ENCODE measurements at regions of chr12 and their contacts with region 1.

Region 1: GRCh38 chr12:6792522-6793201 is 3.3 kb downstream of the CD4 start:
- DNase-seq: peak in 7 of 9 donors; percentile 66 to 79 (median 76)
- ATAC-seq: peak; percentile 76
- H3K4me3 ChIP-seq: peak overlapping the region; percentile 87
- H3K4me3 Mint-ChIP-seq: peak overlapping the region; percentile 85 to 99 (median 96)
- H3K27ac ChIP-seq: peak overlapping the region; percentile 86
- H3K27ac Mint-ChIP-seq: peak overlapping the region; percentile 88 to 99 (median 97)
- H3K4me1 ChIP-seq: peaks cover 0 to 29% of the 10 kb centered on the region in 2 donors
- H3K4me1 Mint-ChIP-seq: peaks cover 52 to 84% (median 72%) of the 10 kb centered on the region in 7 donors
- H3K27me3 ChIP-seq: no peaks in the 10 kb centered on the region
- H3K27me3 Mint-ChIP-seq: no peaks in the 10 kb centered on the region

Region 2: GRCh38 chr12:6764011-6764828 is 28.4 kb before region 1 on chr12:
- CTCF ChIA-PET with region 1: interaction called, 6 read pairs
- POLR2A ChIA-PET with region 1: interaction called, 18 read pairs
- intact Hi-C with region 1: loop called in 1 of 2 experiments (anchors 1 kb)
- DNase-seq: peak in 7 of 9 donors; percentile 40 to 69 (median 55)
- ATAC-seq: peak; percentile 88
- H3K4me3 ChIP-seq: no peak overlapping the region
- H3K4me3 Mint-ChIP-seq: peak overlapping the region; percentile 18 to 96 (median 67)
- H3K27ac ChIP-seq: no peak overlapping the region
- H3K27ac Mint-ChIP-seq: peak overlapping the region in 4 of 9 donors; percentile 9 to 71 (median 43)
- H3K4me1 ChIP-seq: peaks cover 7 to 16% of the 10 kb centered on the region in 2 donors
- H3K4me1 Mint-ChIP-seq: peaks cover 22 to 38% (median 31%) of the 10 kb centered on the region in 7 donors
- H3K27me3 ChIP-seq: no peaks in the 10 kb centered on the region
- H3K27me3 Mint-ChIP-seq: peaks cover 5 to 38% (median 26%) of the 10 kb centered on the region in 5 donors

Region 3: DNA sequence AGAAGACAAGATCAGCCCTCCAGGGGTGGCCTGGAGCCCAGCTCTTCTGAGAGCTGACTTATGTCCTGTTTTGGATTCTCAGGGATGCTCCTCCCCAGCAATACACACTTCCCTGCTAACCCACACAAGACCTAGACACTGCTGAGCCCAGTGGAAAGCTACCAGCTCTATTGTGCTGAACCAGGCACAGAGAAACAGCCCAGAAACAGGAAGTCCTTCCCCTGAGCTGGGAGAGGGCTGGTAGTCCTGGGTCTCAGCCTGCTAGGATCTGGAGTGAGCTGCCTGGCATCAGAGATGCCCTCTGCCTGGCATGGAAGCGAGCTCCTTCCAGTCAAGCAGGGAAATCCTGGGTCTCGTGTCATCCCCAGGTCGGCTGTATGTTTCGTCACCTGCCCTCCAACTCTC is 21.6 kb before region 1 on chr12:
- CTCF ChIA-PET with region 1: interaction called, 6 read pairs
- POLR2A ChIA-PET with region 1: interaction called, 18 read pairs
- intact Hi-C with region 1: loop called (anchors 1 to 2 kb)
- DNase-seq: no peak
- ATAC-seq: no peak
- H3K4me3 ChIP-seq: no peak overlapping the region
- H3K4me3 Mint-ChIP-seq: peak overlapping the region in 5 of 10 donors; percentile 34 to 87 (median 73)
- H3K27ac ChIP-seq: no peak overlapping the region
- H3K27ac Mint-ChIP-seq: peak overlapping the region in 3 of 9 donors; percentile 65 to 91 (median 76)
- H3K4me1 ChIP-seq: peaks cover 17 to 35% of the 10 kb centered on the region in 2 donors
- H3K4me1 Mint-ChIP-seq: peaks cover 32 to 72% (median 45%) of the 10 kb centered on the region in 7 donors
- H3K27me3 ChIP-seq: no peaks in the 10 kb centered on the region
- H3K27me3 Mint-ChIP-seq: peaks cover 0 to 53% (median 17%) of the 10 kb centered on the region in 5 donors

Region 4: DNA sequence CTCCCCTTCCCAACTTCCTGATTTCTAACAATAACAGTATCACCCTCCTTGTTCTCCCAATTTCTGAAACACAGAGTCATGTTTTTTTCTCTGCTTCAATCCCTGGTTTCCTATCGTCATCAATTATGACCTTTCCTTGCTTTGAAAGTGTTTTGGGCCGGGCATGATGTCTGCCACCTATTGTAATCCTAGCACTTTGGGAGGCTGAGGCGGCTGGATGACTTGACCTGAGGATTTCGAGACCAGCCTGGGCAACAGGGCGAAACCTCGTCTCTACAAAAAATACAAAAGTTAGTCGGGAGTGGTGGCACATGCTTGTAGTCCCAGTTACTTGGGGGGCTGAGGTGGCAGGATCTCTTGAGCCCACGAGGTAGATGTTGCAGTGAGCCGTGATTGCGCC is 16.4 kb after region 1 on chr12:
- CTCF ChIA-PET with region 1: interaction called, 3 read pairs
- POLR2A ChIA-PET with region 1: interaction called, 6 read pairs
- intact Hi-C with region 1: loop called in 1 of 2 experiments (anchors 2 kb)
- DNase-seq: peak in 1 of 9 donors; percentile 2
- ATAC-seq: no peak
- H3K4me3 ChIP-seq: no peak overlapping the region
- H3K4me3 Mint-ChIP-seq: no peak overlapping the region
- H3K27ac ChIP-seq: no peak overlapping the region
- H3K27ac Mint-ChIP-seq: peak overlapping the region in 6 of 9 donors; percentile 1 to 55 (median 23)
- H3K4me1 ChIP-seq: no peaks in the 10 kb centered on the region
- H3K4me1 Mint-ChIP-seq: peaks cover 18 to 39% (median 28%) of the 10 kb centered on the region in 7 donors
- H3K27me3 ChIP-seq: no peaks in the 10 kb centered on the region
- H3K27me3 Mint-ChIP-seq: no peaks in the 10 kb centered on the region

Region 5: DNA sequence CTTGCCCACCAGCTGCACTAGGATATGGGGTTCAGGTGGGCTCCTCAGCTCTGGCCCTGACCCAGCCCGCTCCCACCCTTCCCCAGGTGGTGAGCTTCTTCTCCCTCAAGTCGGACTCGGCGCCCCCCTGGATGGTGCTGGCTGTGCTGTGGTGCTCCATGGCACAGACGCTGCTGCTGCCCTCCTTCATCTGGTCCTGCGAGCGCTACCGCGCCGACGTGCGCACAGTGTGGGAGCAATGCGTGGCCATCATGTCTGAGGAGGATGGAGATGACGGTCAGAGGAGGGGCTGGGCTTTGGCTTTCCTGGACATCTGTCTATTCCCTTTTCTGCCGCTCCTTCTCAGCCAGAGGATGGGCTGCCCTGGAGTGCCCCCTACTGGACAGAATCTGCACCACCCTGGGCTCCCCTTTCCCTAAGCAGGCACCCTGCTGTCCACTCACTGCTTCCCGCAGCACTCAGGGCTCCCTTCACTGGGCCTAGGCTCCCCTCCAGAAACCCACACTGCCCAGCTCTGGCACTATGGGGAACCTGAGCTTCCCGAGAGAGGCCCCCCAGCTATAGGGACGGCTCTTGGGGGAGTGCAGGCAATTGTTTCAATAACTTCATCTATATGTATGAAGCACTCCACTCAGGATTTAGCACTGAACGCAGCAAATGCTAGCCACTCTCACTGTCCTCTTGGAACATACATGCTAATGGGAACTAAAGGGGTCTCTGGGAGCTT is 32.9 kb after region 1 on chr12:
- CTCF ChIA-PET with region 1: interaction called, 13 read pairs
- POLR2A ChIA-PET with region 1: interaction called, 16 read pairs
- intact Hi-C with region 1: loop called (anchors 1 to 2 kb)
- DNase-seq: peak; percentile 69 to 89 (median 78)
- ATAC-seq: peak; percentile 79
- H3K4me3 ChIP-seq: no peak overlapping the region
- H3K4me3 Mint-ChIP-seq: peak overlapping the region in 7 of 10 donors; percentile 5 to 65 (median 35)
- H3K27ac ChIP-seq: no peak overlapping the region
- H3K27ac Mint-ChIP-seq: peak overlapping the region in 4 of 9 donors; percentile 22 to 84 (median 53)
- H3K4me1 ChIP-seq: peaks cover 4 to 13% of the 10 kb centered on the region in 2 donors
- H3K4me1 Mint-ChIP-seq: peaks cover 27 to 42% (median 39%) of the 10 kb centered on the region in 7 donors
- H3K27me3 ChIP-seq: peaks cover 0 to 12% of the 10 kb centered on the region in 2 donors
- H3K27me3 Mint-ChIP-seq: peaks cover 9 to 63% (median 26%) of the 10 kb centered on the region in 5 donors